HepG2 (cell line): ENCODE measurements at regions of chr10 and their contacts with region 1.

Region 1: GRCh38 chr10:48363617-48364355 is 57.3 kb downstream of the MAPK8 start:
- DNase-seq: peak; percentile 70
- ATAC-seq: peak; percentile 86
- H3K4me3 ChIP-seq: no peak overlapping the region; a peak in 1 of 6 replicates
- H3K27ac ChIP-seq: no peak overlapping the region
- H3K4me1 ChIP-seq: peaks cover 21% of the 10 kb centered on the region
- H3K27me3 ChIP-seq: no peaks in the 10 kb centered on the region
- CTCF ChIP-seq: peak; percentile 84
- EP300 ChIP-seq: no peak
- POLR2A ChIP-seq: no peak
- RAD21 ChIP-seq: peak; percentile 74

Region 2: DNA sequence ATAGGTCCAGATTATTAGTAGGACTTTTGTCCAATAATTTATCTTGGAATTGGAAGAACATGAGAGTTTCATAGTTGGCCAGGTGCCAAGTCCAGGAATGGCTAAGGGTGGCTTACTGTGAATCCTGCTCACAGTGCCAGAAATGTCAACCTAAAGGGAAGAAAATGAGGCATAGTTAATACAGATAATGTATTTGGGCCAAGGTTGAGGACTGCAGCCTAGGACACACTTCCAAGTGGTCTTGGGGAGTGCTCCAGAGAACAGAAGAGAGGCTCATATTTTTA is 20.9 kb after region 1 on chr10:
- CTCF ChIA-PET with region 1: no interaction called
- POLR2A ChIA-PET with region 1: no interaction called
- in situ Hi-C with region 1: no loop called
- intact Hi-C with region 1: loop called (anchors 2 kb)
- DNase-seq: no peak
- ATAC-seq: no peak
- H3K4me3 ChIP-seq: no peak overlapping the region
- H3K27ac ChIP-seq: no peak overlapping the region
- H3K4me1 ChIP-seq: 0 out of 2 replicates have a peak, but pooled peaks cover 2% of the 10 kb centered on the region
- H3K27me3 ChIP-seq: no peaks in the 10 kb centered on the region
- CTCF ChIP-seq: no peak
- EP300 ChIP-seq: no peak
- POLR2A ChIP-seq: no peak
- RAD21 ChIP-seq: no peak

Region 3: DNA sequence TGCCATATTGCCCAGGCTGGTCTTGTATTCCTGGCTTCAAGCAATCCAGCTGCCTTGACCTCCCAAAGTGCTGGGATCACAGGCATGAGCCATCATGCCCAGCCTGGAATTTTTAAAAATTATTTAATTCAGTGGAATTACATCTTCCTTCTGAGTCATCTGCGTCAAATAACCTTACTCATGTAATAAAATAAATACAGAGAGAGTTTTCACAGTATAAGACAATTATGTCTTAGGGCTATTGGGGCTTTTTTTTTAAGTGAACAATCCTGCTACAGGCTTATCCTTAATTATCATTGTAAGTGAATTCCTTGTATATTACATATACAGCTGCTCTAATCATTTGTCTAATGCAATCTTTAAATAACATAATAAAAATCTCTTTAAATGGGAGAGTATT is 51.0 kb after region 1 on chr10:
- CTCF ChIA-PET with region 1: no interaction called
- POLR2A ChIA-PET with region 1: no interaction called
- in situ Hi-C with region 1: no loop called
- intact Hi-C with region 1: loop called (anchors 10 kb)
- DNase-seq: no peak
- ATAC-seq: no peak
- H3K4me3 ChIP-seq: no peak overlapping the region
- H3K27ac ChIP-seq: no peak overlapping the region
- H3K4me1 ChIP-seq: peaks cover 36% of the 10 kb centered on the region
- H3K27me3 ChIP-seq: no peaks in the 10 kb centered on the region
- CTCF ChIP-seq: no peak
- EP300 ChIP-seq: no peak
- POLR2A ChIP-seq: no peak
- RAD21 ChIP-seq: no peak

Region 4: DNA sequence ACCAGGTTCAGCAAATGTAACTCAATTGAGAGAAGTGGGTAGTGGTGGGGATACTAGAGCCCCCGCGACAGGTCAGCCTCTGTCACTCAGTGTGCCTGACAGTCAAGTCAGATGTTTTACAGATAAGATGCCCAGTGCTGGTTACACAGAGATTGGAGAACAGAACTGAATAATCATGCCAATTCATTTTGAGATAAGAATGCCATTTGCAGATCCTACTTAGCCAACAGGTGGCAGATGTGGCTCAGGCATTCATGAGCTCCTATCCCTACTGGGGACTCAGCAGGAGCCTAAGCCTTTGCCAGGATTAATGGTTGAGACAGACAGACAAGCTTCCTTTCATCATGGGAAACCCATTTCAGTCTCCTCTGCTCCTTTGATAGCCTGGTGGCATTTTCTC is 80.5 kb after region 1 on chr10:
- CTCF ChIA-PET with region 1: interaction called, 3 read pairs
- POLR2A ChIA-PET with region 1: no interaction called
- in situ Hi-C with region 1: loop called (anchors 5 kb)
- intact Hi-C with region 1: loop called (anchors 1 kb)
- DNase-seq: peak; percentile 14
- ATAC-seq: 0 out of 3 replicates have a peak, but pooled peaks have one; percentile 7
- H3K4me3 ChIP-seq: no peak overlapping the region
- H3K27ac ChIP-seq: no peak overlapping the region
- H3K4me1 ChIP-seq: peaks cover 12% of the 10 kb centered on the region
- H3K27me3 ChIP-seq: peaks cover 0 to 3% of the 10 kb centered on the region in 2 experiments; a peak in 2 of 5 replicates
- CTCF ChIP-seq: peak; percentile 35
- EP300 ChIP-seq: no peak
- POLR2A ChIP-seq: no peak
- RAD21 ChIP-seq: no peak

Region 5: DNA sequence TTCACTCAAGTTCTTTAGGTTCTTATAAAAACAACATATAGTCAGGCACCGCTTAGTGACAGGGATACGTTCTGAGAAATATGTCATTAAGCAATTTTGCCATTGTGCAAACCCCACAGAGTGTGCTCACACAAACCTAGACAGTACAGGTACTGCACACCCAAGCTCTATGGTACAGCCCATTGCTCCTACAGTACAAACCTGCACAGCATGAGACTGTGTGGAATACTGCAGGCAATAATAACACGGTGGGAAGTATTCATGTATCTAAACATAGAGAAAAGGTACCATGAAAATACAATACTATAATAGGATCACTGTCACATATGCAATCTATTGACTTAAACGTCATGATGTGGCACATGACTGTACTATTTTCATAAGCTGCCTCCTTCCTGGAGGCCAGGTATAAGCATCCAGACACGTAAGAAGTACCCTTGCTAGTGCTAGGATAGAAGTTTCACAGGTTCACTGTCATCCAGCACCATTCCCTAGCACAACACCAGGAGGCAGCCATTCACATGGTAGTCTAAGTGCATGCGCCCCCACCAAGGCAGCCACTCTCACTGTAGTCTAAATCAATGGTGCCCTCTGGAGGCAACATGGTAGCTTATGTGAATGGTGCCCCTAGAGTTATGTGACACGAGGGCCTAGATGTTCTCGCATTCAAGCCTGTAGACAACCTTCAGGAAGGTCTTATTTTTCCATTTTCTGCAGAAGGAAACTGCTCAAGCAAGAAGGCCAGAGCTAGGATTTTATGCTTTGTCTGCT is 142.5 kb after region 1 on chr10:
- CTCF ChIA-PET with region 1: interaction called, 46 read pairs
- POLR2A ChIA-PET with region 1: no interaction called
- in situ Hi-C with region 1: loop called (anchors 5 kb)
- intact Hi-C with region 1: loop called (anchors 1 kb)
- DNase-seq: peak; percentile 88
- ATAC-seq: peak; percentile 96
- H3K4me3 ChIP-seq: no peak overlapping the region
- H3K27ac ChIP-seq: no peak overlapping the region
- H3K4me1 ChIP-seq: 0 out of 2 replicates have a peak, but pooled peaks cover 6% of the 10 kb centered on the region
- H3K27me3 ChIP-seq: no peaks in the 10 kb centered on the region; a peak in 2 of 5 replicates
- CTCF ChIP-seq: peak; percentile 93
- EP300 ChIP-seq: no peak
- POLR2A ChIP-seq: no peak
- RAD21 ChIP-seq: peak; percentile 83

Region 6: GRCh38 chr10:48656241-48656913 is 292.6 kb after region 1 on chr10:
- CTCF ChIA-PET with region 1: interaction called, 20 read pairs
- POLR2A ChIA-PET with region 1: no interaction called
- in situ Hi-C with region 1: loop called (anchors 25 kb)
- intact Hi-C with region 1: loop called (anchors 5 kb)
- DNase-seq: peak; percentile 66
- ATAC-seq: peak; percentile 94
- H3K4me3 ChIP-seq: peak overlapping the region; percentile 24 to 68 (median 34); a peak in 5 of 6 replicates
- H3K27ac ChIP-seq: no peak overlapping the region
- H3K4me1 ChIP-seq: peaks cover 16% of the 10 kb centered on the region
- H3K27me3 ChIP-seq: peaks cover 4 to 19% of the 10 kb centered on the region in 2 experiments; a peak in 4 of 5 replicates
- CTCF ChIP-seq: peak; percentile 89
- EP300 ChIP-seq: no peak
- POLR2A ChIP-seq: no peak
- RAD21 ChIP-seq: peak; percentile 91